Activated CD4-positive, alpha-beta memory T cell treated with anti-CD3 and anti-CD28 coated beads for 36 hours (primary cell): ENCODE measurements at regions of chr11 and their contacts with region 1.

Region 1: GRCh38 chr11:110429731-110430266 is at the start of gene FDX1:
- DNase-seq: peak; percentile 90
- H3K4me3 Mint-ChIP-seq: peak within 1 kb of the TSS; percentile 98
- H3K27ac Mint-ChIP-seq: peak within 1 kb of the TSS; percentile 93
- H3K4me1 Mint-ChIP-seq: peaks cover 38% of the 10 kb centered on the region
- H3K27me3 Mint-ChIP-seq: no peaks in the 10 kb centered on the region
- total RNA-seq, gene FDX1: 9.8 to 11.2 TPM

Region 2: GRCh38 chr11:109946322-109946846 is 483.4 kb before region 1 on chr11:
- CTCF ChIA-PET with region 1: no interaction called
- POLR2A ChIA-PET with region 1: no interaction called
- intact Hi-C with region 1: loop called (anchors 2 kb)
- DNase-seq: peak; percentile 70
- H3K4me3 Mint-ChIP-seq: no peak overlapping the region
- H3K27ac Mint-ChIP-seq: no peak overlapping the region
- H3K4me1 Mint-ChIP-seq: peaks cover 2% of the 10 kb centered on the region
- H3K27me3 Mint-ChIP-seq: no peaks in the 10 kb centered on the region

Region 3: GRCh38 chr11:110173811-110174644 is 255.8 kb before region 1 on chr11:
- CTCF ChIA-PET with region 1: interaction called, 3 read pairs
- POLR2A ChIA-PET with region 1: no interaction called
- intact Hi-C with region 1: loop called (anchors 1 kb)
- DNase-seq: peak; percentile 76
- H3K4me3 Mint-ChIP-seq: no peak overlapping the region
- H3K27ac Mint-ChIP-seq: no peak overlapping the region
- H3K4me1 Mint-ChIP-seq: peaks cover 5% of the 10 kb centered on the region
- H3K27me3 Mint-ChIP-seq: peaks cover 12% of the 10 kb centered on the region

Region 4: DNA sequence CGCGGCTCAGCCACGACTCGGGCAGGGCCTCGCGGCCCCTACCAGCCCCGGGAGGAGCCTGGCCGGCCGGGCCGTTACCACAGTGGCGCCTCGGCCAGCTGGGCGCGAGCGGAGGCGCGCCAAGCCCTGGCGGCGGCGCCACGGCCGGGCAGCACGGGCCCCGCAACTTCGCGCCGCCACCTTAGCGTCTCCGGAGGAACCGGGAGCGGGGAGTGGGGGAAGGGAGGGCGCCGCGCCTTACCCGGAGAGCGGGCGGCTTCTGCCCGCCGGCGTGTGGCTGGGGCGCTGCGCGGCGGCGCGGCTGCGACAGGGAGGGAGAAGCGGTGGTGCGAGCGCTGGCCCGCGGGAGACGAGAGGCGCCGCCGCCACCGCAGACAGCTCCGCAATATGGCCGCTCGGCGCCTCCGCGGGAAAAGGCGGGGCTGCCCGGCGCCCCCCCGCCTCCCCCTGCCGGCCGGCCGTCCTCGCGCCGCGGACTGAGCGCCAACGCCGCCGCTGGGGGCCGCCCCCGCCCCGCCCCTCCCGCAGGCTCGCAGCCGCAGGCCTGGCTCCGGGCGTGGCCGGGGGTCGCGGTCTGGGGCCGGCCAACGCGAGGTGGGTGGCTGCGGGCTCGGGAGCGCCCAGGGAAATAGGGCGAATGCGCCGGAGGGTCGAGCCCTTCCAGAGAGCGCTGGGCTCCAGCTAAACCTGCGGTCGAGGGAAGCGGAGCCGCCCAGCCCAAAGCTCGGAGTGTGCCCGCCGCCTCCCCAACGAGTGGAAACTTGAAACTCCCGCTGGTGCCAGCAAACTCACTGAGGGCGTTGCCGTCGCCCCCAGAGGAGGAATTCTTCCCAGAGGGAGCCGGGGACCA is 133.3 kb before region 1 on chr11 and contains the start of gene RDX:
- CTCF ChIA-PET with region 1: interaction called, 6 read pairs
- POLR2A ChIA-PET with region 1: no interaction called
- intact Hi-C with region 1: loop called (anchors 1 kb)
- DNase-seq: peak; percentile 69
- H3K4me3 Mint-ChIP-seq: peak within 1 kb of the TSS; percentile 85
- H3K27ac Mint-ChIP-seq: peak within 1 kb of the TSS; percentile 78
- H3K4me1 Mint-ChIP-seq: peaks cover 41% of the 10 kb centered on the region
- H3K27me3 Mint-ChIP-seq: no peaks in the 10 kb centered on the region
- total RNA-seq, gene RDX: 47.9 to 56.2 TPM

Region 5: GRCh38 chr11:110337570-110338193 is 92.1 kb before region 1 on chr11:
- CTCF ChIA-PET with region 1: no interaction called
- POLR2A ChIA-PET with region 1: no interaction called
- intact Hi-C with region 1: no loop called
- DNase-seq: peak; percentile 79
- H3K4me3 Mint-ChIP-seq: no peak overlapping the region
- H3K27ac Mint-ChIP-seq: peak overlapping the region; percentile 45
- H3K4me1 Mint-ChIP-seq: peaks cover 23% of the 10 kb centered on the region
- H3K27me3 Mint-ChIP-seq: no peaks in the 10 kb centered on the region

Region 6: GRCh38 chr11:110447897-110448745 is 18.3 kb after region 1 on chr11:
- CTCF ChIA-PET with region 1: interaction called, 11 read pairs
- POLR2A ChIA-PET with region 1: no interaction called
- intact Hi-C with region 1: loop called (anchors 2 kb)
- DNase-seq: no peak
- H3K4me3 Mint-ChIP-seq: no peak overlapping the region
- H3K27ac Mint-ChIP-seq: no peak overlapping the region
- H3K4me1 Mint-ChIP-seq: peaks cover 16% of the 10 kb centered on the region
- H3K27me3 Mint-ChIP-seq: no peaks in the 10 kb centered on the region

Region 7: GRCh38 chr11:111230122-111230465 is 800.3 kb after region 1 on chr11:
- CTCF ChIA-PET with region 1: interaction called, 15 read pairs
- POLR2A ChIA-PET with region 1: no interaction called
- intact Hi-C with region 1: no loop called
- DNase-seq: no peak
- H3K4me3 Mint-ChIP-seq: no peak overlapping the region
- H3K27ac Mint-ChIP-seq: no peak overlapping the region
- H3K4me1 Mint-ChIP-seq: peaks cover 15% of the 10 kb centered on the region
- H3K27me3 Mint-ChIP-seq: peaks cover 16% of the 10 kb centered on the region